K562 (cell line): ENCODE measurements at regions of chr18 and their contacts with region 1.

Region 1: GRCh38 chr18:12890506-12890905 is 6.5 kb upstream of the PTPN2 start:
- DNase-seq: peak in 2 of 4 experiments; percentile 38 to 46
- ATAC-seq: peak; percentile 89
- H3K4me3 ChIP-seq: no peak overlapping the region
- H3K27ac ChIP-seq: no peak overlapping the region
- H3K4me1 ChIP-seq: peaks cover 0 to 3% of the 10 kb centered on the region in 2 experiments; a peak in 1 of 5 replicates
- H3K27me3 ChIP-seq: no peaks in the 10 kb centered on the region
- CTCF ChIP-seq: peak; percentile 35 to 40 (median 37); a peak in 3 of 6 replicates
- EP300 ChIP-seq: no peak
- POLR2A ChIP-seq: no peak
- RAD21 ChIP-seq: peak in 1 of 2 experiments; percentile 32; a peak in 1 of 4 replicates

Region 2: DNA sequence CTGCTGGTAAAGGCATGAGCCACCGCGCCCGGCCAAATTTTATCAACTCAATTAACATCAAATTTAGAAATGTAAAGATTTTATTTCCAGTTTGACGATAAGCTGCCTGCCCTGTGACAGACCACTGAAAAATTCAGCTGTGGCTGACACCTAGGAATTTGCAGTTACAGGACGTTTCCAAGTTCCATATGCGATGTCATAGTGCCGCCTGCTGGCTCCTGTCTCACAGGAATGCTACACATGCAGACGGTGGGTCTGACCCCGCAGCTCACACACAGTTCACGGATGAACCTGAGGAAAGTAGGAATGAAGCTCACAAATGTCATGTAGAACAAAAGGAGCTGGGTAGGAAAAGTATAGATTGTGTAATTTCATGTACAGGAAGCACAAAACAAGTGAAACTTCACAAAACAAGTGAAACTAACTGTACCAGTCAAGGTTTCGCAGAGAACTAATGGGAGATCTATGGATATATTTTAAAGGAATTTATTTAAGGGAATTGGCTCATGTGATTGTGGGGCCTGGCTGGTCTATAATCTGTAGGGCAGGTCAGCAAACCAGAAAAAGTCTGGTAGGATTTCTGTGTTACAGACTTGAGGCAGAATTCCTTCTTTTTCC is 44.1 kb after region 1 on chr18:
- CTCF ChIA-PET with region 1: no interaction called
- POLR2A ChIA-PET with region 1: no interaction called
- in situ Hi-C with region 1: no loop called
- intact Hi-C with region 1: loop called (anchors 2 kb)
- DNase-seq: peak; percentile 68 to 89 (median 74)
- ATAC-seq: peak; percentile 95
- H3K4me3 ChIP-seq: no peak overlapping the region
- H3K27ac ChIP-seq: no peak overlapping the region
- H3K4me1 ChIP-seq: no peaks in the 10 kb centered on the region; a peak in 1 of 5 replicates
- H3K27me3 ChIP-seq: no peaks in the 10 kb centered on the region
- CTCF ChIP-seq: peak; percentile 92 to 98 (median 98)
- EP300 ChIP-seq: no peak
- POLR2A ChIP-seq: no peak
- RAD21 ChIP-seq: peak; percentile 95 to 99